ENCODE measurements at regions of chr21 and their contacts with region 1.

Region 1: GRCh38 chr21:44911389-44912157 is 9.1 kb downstream of the ITGB2 start:
- DNase-seq: peak; percentile 46
- ATAC-seq: peak; percentile 62
- H3K4me3 ChIP-seq: peak overlapping the region; percentile 58 to 80 (median 65)
- H3K27ac ChIP-seq: peak overlapping the region; percentile 94
- H3K4me1 ChIP-seq: peaks cover 92% of the 10 kb centered on the region
- H3K27me3 ChIP-seq: no peaks in the 10 kb centered on the region
- CTCF ChIP-seq: peak; percentile 96
- EP300 ChIP-seq: no peak
- POLR2A ChIP-seq: no peak
- RAD21 ChIP-seq: peak; percentile 89

Region 2: DNA sequence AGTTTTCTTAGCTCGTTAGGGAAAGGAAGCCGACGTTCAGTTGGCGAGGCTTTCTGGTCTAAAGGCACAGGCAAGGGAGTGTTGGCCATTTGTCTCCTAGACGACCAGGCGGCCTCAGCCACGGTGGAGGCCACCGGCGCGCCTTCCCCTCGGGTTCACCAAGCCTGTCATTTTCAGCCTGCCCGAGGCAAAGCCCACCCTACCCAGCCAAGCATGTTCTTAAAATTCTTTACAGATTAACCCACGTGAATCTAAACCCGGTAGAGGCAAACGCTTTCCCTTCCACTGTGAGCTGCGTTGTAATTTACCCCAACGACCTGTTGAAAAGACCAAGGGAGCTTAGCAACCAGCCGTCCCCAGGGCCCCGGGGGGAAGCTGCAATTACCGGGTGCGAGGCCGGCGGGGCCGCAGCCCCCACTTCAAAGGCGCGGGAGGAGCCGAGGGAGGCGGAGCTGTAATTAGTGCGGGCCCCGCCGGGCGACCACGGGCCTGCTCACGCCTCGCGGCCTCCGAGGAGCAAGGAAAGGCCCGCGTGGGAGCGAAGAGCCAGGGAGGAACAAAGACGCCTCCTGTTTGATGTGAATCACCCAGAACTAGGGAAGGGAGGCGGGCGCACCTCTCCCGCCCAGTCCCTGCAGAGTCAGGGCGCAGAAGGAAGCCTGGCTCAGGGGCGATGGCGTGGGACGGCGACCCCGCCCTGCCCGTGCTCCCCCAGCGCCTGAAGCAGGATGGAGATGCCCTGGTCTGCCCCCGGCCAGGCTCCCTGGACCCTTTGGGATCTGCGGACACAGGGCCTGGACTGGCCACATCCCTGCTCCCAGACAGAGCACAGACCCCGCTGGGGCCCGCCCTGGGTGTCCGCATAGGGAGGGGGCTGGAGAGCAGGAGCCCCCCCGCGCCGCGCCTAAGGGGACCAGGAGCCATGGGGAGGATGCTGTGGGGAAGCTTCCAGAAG is 188.1 kb before region 1 on chr21:
- CTCF ChIA-PET with region 1: no interaction called
- POLR2A ChIA-PET with region 1: no interaction called
- in situ Hi-C with region 1: no loop called
- intact Hi-C with region 1: no loop called
- DNase-seq: no peak
- ATAC-seq: no peak; the same call in 2 of the 3 replicates
- H3K4me3 ChIP-seq: no peak overlapping the region
- H3K27ac ChIP-seq: no peak overlapping the region
- H3K4me1 ChIP-seq: no peaks in the 10 kb centered on the region
- H3K27me3 ChIP-seq: peaks cover 0 to 17% of the 10 kb centered on the region in 2 experiments; a peak in 1 of 5 replicates
- CTCF ChIP-seq: no peak
- EP300 ChIP-seq: no peak
- POLR2A ChIP-seq: no peak
- RAD21 ChIP-seq: no peak

Region 3: GRCh38 chr21:44801468-44802395 is 109.8 kb before region 1 on chr21 and contains the start of gene UBE2G2:
- CTCF ChIA-PET with region 1: interaction called, 7 read pairs
- POLR2A ChIA-PET with region 1: interaction called, 31 read pairs
- in situ Hi-C with region 1: loop called (anchors 5 kb)
- intact Hi-C with region 1: loop called (anchors 5 kb)
- DNase-seq: peak; percentile 59
- ATAC-seq: peak; percentile 89
- H3K4me3 ChIP-seq: peak within 1 kb of the TSS; percentile 79 to 86 (median 80)
- H3K27ac ChIP-seq: peak within 1 kb of the TSS; percentile 88
- H3K4me1 ChIP-seq: peaks cover 53% of the 10 kb centered on the region
- H3K27me3 ChIP-seq: no peaks in the 10 kb centered on the region; a peak in 1 of 5 replicates
- CTCF ChIP-seq: no peak
- EP300 ChIP-seq: no peak
- POLR2A ChIP-seq: peak; percentile 63 to 90
- RAD21 ChIP-seq: peak; percentile 58
- total RNA-seq, gene UBE2G2: 55.4 and 62.0 TPM in 2 replicates

Region 4: DNA sequence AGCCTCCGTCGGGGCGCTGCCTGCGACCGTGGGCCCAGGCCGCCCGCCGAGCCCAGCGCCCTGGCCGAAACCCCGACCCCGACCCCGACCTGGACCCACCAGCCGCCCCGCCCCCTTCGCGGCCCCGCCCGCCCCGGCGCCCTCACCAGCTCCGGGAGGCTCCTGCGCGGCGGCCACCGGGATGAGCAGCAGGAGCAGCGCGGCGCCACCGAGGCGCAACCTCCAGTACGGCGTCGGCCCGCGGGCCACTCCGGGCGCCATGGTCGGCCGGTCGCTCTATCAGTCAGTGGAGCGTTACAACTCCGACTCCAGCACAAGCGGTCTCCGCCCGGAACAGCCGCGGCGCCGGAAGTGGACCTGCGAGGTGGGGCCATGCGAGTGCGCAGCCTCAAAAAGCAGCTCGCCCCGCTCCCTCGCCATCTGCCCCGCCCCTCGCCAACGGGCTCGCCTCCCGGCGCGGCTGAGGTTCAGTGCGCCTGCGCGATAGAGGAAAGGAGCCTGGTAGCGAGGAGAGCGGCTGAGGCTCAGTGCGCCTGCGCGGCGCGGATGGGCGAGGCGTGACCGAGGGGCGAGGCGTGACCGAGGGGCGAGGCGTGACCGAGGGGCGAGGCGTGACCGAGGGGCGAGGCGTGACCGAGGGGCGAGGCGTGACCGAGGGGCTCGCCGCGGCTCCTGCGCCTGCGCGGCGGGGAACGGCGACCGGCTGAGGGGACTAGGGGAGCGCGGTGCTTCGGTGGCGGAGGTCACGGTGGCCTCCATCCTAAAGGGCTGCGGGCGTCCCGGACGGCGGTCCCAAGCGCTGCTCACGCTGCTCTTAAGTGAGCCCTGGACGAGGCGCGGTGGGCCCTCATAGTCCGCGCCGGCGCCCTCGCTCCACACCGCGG is 38.0 kb before region 1 on chr21 and contains the start of gene PTTG1IP:
- CTCF ChIA-PET with region 1: no interaction called
- POLR2A ChIA-PET with region 1: interaction called, 50 read pairs
- in situ Hi-C with region 1: no loop called
- intact Hi-C with region 1: loop called (anchors 1 kb)
- DNase-seq: peak; percentile 93
- ATAC-seq: peak; percentile 70
- H3K4me3 ChIP-seq: peak within 1 kb of the TSS; percentile 71 to 94 (median 82)
- H3K27ac ChIP-seq: peak within 1 kb of the TSS; percentile 72
- H3K4me1 ChIP-seq: peaks cover 74% of the 10 kb centered on the region
- H3K27me3 ChIP-seq: no peaks in the 10 kb centered on the region; a peak in 1 of 5 replicates
- CTCF ChIP-seq: 0 out of 2 replicates have a peak, but pooled peaks have one; percentile 2
- EP300 ChIP-seq: no peak
- POLR2A ChIP-seq: peak in 1 of 2 experiments; percentile 80; a peak in 2 of 4 replicates
- RAD21 ChIP-seq: no peak
- total RNA-seq, gene PTTG1IP: 89.4 and 161 TPM in 2 replicates

Region 5: DNA sequence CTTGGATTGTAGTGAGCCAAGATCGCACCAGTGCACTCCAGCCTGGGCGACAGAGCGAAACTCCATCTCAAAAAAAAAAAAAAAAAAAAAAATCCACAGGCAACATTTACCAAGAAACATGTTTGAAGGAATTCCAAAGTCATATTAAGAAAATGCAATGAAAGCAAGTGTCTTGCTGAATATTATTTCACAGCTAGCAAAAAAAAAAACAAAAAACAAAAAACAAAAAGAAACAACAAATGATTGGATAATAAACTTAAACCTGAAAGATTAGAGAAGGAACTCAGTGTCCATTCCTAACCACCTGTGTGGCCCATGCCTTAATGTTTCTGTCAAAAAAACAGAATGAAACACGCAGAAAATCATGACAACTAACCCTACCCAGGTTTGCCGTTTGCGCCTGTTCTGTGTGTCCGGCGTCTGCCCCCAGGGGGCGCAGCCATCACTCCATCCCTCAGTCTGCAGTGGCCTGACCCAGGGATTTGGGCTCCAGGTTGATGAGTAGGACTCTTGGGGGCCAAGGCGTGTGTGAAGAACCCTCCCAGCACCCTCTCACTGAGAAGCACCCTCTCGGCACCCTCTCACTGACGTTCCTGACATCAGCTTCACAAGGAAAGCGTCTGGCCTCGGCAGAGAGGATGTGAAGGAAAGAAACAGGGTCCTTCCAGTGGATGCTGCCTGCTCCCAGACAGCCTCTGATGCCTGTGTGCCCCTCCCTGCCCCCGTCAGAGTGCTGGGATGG is 18.9 kb before region 1 on chr21:
- CTCF ChIA-PET with region 1: interaction called, 8 read pairs
- POLR2A ChIA-PET with region 1: interaction called, 6 read pairs
- in situ Hi-C with region 1: no loop called
- intact Hi-C with region 1: loop called (anchors 1 kb)
- DNase-seq: no peak
- ATAC-seq: peak; percentile 67
- H3K4me3 ChIP-seq: no peak overlapping the region
- H3K27ac ChIP-seq: no peak overlapping the region
- H3K4me1 ChIP-seq: peaks cover 74% of the 10 kb centered on the region
- H3K27me3 ChIP-seq: peaks cover 3 to 7% of the 10 kb centered on the region in 2 experiments; a peak in 2 of 5 replicates
- CTCF ChIP-seq: peak; percentile 90
- EP300 ChIP-seq: no peak
- POLR2A ChIP-seq: no peak
- RAD21 ChIP-seq: peak; percentile 73

Region 6: GRCh38 chr21:44939532-44940115 is 28.1 kb after region 1 on chr21 and contains the start of gene SLX9:
- CTCF ChIA-PET with region 1: no interaction called
- POLR2A ChIA-PET with region 1: interaction called, 17 read pairs
- in situ Hi-C with region 1: no loop called
- intact Hi-C with region 1: no loop called
- DNase-seq: peak; percentile 62
- ATAC-seq: peak; percentile 89
- H3K4me3 ChIP-seq: peak within 1 kb of the TSS; percentile 78 to 95 (median 81)
- H3K27ac ChIP-seq: peak within 1 kb of the TSS; percentile 70
- H3K4me1 ChIP-seq: peaks cover 62% of the 10 kb centered on the region
- H3K27me3 ChIP-seq: no peaks in the 10 kb centered on the region; a peak in 1 of 5 replicates
- CTCF ChIP-seq: no peak
- EP300 ChIP-seq: peak; percentile 45 to 62; a peak in 3 of 4 replicates
- POLR2A ChIP-seq: peak; percentile 56 to 84
- RAD21 ChIP-seq: peak; percentile 46
- total RNA-seq, gene SLX9: 47.1 and 51.5 TPM in 2 replicates